Head of caudate nucleus (tissue), 42 donors: ENCODE measurements at regions of chr1 and their contacts with region 1.

Region 1: GRCh38 chr1:29550119-29550898 is 314.0 kb downstream of the PTPRU start:
- DNase-seq: peak in 1 of 42 donors; percentile 30

Region 2: DNA sequence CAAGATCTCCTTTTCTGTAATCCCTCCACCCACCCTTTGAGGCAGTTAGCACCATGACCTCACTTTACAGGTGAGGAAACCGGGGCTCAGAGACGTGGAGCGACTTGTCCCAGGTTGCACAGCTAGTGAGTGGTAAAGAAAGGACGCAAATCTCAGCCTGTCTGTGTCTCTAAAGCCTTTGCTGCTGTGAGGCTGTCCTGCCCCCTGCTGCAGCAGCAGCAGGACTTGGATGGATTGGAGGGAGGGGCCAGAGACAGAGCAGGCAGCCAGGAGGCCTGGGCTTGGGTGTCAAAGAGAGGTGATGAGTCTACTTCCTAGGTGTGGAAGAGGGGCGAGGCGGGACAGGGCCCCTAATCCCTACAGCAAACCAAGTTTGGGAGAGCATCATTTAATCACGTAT is 244.4 kb before region 1 on chr1:
- intact Hi-C with region 1: no loop called
- DNase-seq: no peak

Region 3: GRCh38 chr1:30652152-30652841 is 1102.0 kb after region 1 on chr1:
- intact Hi-C with region 1: loop called (anchors 10 kb)
- DNase-seq: peak in 1 of 42 donors; percentile 2